GM23248 (cell line): ENCODE measurements at regions of chr1 and their contacts with region 1.

Region 1: GRCh38 chr1:67149179-67149770 is 14.5 kb upstream of the C1orf141 start:
- DNase-seq: peak; percentile 90
- H3K4me3 ChIP-seq: peak overlapping the region; percentile 17; the same call in 1 of the 2 replicates
- H3K27ac ChIP-seq: no peak overlapping the region
- H3K4me1 ChIP-seq: peaks cover 4% of the 10 kb centered on the region; the same call in 1 of the 2 replicates
- H3K27me3 ChIP-seq: peaks cover 11% of the 10 kb centered on the region

Region 2: DNA sequence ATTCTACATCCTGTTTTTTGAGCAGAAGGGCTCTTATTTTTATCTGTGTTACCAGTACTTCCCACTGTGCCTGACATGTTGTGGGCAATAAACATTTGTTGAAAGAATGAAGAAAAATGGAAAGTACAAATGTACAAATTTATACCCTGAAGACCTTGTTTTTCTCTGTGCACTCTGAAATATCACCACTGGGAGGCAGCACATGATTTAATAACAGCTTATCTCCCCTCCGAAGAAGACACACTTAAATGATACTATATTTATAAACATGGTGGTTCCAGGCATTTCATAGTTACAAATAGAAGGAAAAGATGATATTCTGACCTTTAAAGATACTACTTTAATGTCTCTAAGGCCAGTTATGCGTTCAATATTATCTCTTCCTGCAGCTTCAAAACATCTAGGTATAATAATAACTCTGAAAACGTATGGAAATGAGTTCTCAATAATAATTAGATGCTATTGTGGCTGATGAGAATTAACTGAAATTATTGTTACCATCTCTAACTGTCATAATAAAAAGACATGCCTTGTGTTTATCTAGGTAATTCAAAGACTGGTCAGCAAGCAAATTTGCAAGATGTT is 384.2 kb before region 1 on chr1:
- in situ Hi-C with region 1: loop called (anchors 5 kb)
- DNase-seq: peak; percentile 69
- H3K4me3 ChIP-seq: no peak overlapping the region
- H3K27ac ChIP-seq: no peak overlapping the region
- H3K4me1 ChIP-seq: no peaks in the 10 kb centered on the region
- H3K27me3 ChIP-seq: no peaks in the 10 kb centered on the region

Region 3: DNA sequence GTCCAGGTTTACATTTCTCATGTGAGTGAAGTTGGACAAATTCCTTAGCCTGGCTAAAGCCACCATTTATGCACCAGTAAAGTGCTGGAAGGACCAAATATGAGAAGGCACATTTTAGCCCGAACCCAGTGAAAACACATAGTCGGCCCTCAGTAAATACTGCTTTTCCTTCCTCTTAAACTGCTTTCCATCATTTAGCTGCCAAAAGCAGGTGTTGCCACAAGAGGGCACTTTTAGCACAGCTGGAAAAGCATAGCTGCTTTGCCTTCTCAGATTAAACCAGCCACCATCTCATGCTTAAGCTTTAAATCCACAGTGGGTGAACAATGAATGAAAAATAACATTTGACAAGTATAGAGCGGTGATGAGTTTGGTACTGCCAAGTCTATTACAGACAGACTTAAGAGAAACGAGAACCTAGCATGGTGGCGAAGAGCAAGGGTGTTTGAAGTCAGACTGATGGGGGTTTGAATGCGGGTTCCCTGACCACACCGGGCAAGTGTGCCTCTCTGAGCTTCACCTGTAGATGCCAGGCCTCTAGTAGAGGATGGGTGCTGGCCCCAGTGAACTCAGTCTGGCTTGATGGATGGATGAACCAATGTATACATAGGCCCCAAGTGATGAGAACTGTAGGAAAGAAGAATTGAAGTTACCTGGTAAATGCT is 153.1 kb before region 1 on chr1:
- in situ Hi-C with region 1: loop called (anchors 5 kb)
- DNase-seq: peak; percentile 85
- H3K4me3 ChIP-seq: no peak overlapping the region
- H3K27ac ChIP-seq: no peak overlapping the region
- H3K4me1 ChIP-seq: no peaks in the 10 kb centered on the region
- H3K27me3 ChIP-seq: no peaks in the 10 kb centered on the region

Region 4: GRCh38 chr1:67029472-67029871 is 119.8 kb before region 1 on chr1:
- in situ Hi-C with region 1: no loop called
- DNase-seq: no peak
- H3K4me3 ChIP-seq: no peak overlapping the region
- H3K27ac ChIP-seq: no peak overlapping the region
- H3K4me1 ChIP-seq: no peaks in the 10 kb centered on the region
- H3K27me3 ChIP-seq: no peaks in the 10 kb centered on the region

Region 5: GRCh38 chr1:67041841-67042503 is 107.3 kb before region 1 on chr1:
- in situ Hi-C with region 1: no loop called
- DNase-seq: peak; percentile 83
- H3K4me3 ChIP-seq: 0 out of 2 replicates have a peak overlapping the region, but pooled peaks have one; percentile 6
- H3K27ac ChIP-seq: peak overlapping the region; percentile 59
- H3K4me1 ChIP-seq: peaks cover 28% of the 10 kb centered on the region
- H3K27me3 ChIP-seq: no peaks in the 10 kb centered on the region

Region 6: GRCh38 chr1:67382292-67382691 is 233.0 kb after region 1 on chr1:
- in situ Hi-C with region 1: no loop called
- DNase-seq: no peak
- H3K4me3 ChIP-seq: no peak overlapping the region
- H3K27ac ChIP-seq: no peak overlapping the region
- H3K4me1 ChIP-seq: no peaks in the 10 kb centered on the region
- H3K27me3 ChIP-seq: no peaks in the 10 kb centered on the region